CD8-positive, alpha-beta T cell (primary cell): ENCODE measurements at regions of chr17 and their contacts with region 1.

Region 1: GRCh38 chr17:80219013-80219762 is 945 bp downstream of the SGSH start:
- DNase-seq: peak; percentile 84 to 97 (median 95)
- ATAC-seq: peak; percentile 89
- H3K4me3 ChIP-seq: peak overlapping the region; percentile 94 to 96
- H3K4me3 Mint-ChIP-seq: peak overlapping the region; percentile 91
- H3K27ac ChIP-seq: peak overlapping the region; percentile 86 to 91
- H3K27ac Mint-ChIP-seq: peak overlapping the region; percentile 96
- H3K4me1 ChIP-seq: peaks cover 32% of the 10 kb centered on the region
- H3K4me1 Mint-ChIP-seq: peaks cover 36% of the 10 kb centered on the region
- H3K27me3 ChIP-seq: no peaks in the 10 kb centered on the region
- H3K27me3 Mint-ChIP-seq: no peaks in the 10 kb centered on the region
- CTCF ChIP-seq: no peak

Region 2: DNA sequence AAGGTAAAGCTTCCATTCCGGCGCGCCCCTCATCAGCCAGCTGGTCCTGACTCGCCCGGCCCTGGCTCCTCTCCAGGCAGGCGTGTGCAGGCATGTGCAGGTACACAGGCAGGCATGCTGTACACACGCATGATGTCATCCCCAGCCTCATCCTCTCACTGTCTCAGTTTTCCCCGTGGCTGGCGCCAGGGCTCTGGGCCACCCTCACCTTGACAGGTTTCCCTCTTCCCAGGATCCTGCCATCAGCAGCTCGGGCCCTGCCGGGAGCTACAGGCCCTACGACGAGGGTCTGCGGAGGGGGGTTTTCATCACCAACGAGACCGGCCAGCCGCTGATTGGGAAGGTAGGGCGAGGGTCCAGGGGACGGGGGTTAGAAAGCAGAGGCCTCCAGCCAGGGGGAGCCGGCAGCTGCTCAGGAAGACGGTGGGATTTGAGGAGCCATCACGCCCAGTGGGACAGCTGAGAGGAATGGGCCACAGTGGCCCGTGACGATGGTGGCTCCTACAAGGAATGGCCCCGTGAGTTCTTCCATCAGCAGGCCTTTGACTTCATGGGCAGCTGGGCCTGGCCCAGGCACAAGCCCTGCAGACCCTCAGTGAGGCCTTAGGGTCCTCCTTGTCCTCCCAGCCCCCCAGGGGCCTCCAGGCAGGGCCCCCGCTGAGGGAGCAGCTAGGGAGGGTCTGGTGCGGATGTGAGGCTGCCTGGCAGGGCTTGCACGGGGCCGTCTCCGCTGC is 109.3 kb before region 1 on chr17:
- CTCF ChIA-PET with region 1: no interaction called
- POLR2A ChIA-PET with region 1: no interaction called
- intact Hi-C with region 1: no loop called
- DNase-seq: no peak
- ATAC-seq: no peak
- H3K4me3 ChIP-seq: no peak overlapping the region
- H3K4me3 Mint-ChIP-seq: no peak overlapping the region
- H3K27ac ChIP-seq: no peak overlapping the region
- H3K27ac Mint-ChIP-seq: no peak overlapping the region
- H3K4me1 ChIP-seq: no peaks in the 10 kb centered on the region
- H3K4me1 Mint-ChIP-seq: no peaks in the 10 kb centered on the region
- H3K27me3 ChIP-seq: no peaks in the 10 kb centered on the region
- H3K27me3 Mint-ChIP-seq: no peaks in the 10 kb centered on the region
- CTCF ChIP-seq: no peak

Region 3: GRCh38 chr17:80189611-80190010 is 29.6 kb before region 1 on chr17:
- CTCF ChIA-PET with region 1: no interaction called
- POLR2A ChIA-PET with region 1: no interaction called
- intact Hi-C with region 1: no loop called
- DNase-seq: no peak
- ATAC-seq: no peak
- H3K4me3 ChIP-seq: no peak overlapping the region
- H3K4me3 Mint-ChIP-seq: no peak overlapping the region
- H3K27ac ChIP-seq: no peak overlapping the region
- H3K27ac Mint-ChIP-seq: no peak overlapping the region
- H3K4me1 ChIP-seq: no peaks in the 10 kb centered on the region
- H3K4me1 Mint-ChIP-seq: no peaks in the 10 kb centered on the region
- H3K27me3 ChIP-seq: no peaks in the 10 kb centered on the region
- H3K27me3 Mint-ChIP-seq: peaks cover 9% of the 10 kb centered on the region
- CTCF ChIP-seq: no peak

Region 4: GRCh38 chr17:80254396-80255251 is 35.4 kb after region 1 on chr17:
- CTCF ChIA-PET with region 1: interaction called, 3 read pairs
- POLR2A ChIA-PET with region 1: interaction called, 3 read pairs
- intact Hi-C with region 1: loop called (anchors 1 kb)
- DNase-seq: peak in 5 of 9 experiments; percentile 33 to 75 (median 54)
- ATAC-seq: peak; percentile 34
- H3K4me3 ChIP-seq: no peak overlapping the region
- H3K4me3 Mint-ChIP-seq: no peak overlapping the region
- H3K27ac ChIP-seq: peak overlapping the region in 1 of 2 experiments; percentile 51
- H3K27ac Mint-ChIP-seq: peak overlapping the region; percentile 85
- H3K4me1 ChIP-seq: peaks cover 7% of the 10 kb centered on the region
- H3K4me1 Mint-ChIP-seq: peaks cover 28% of the 10 kb centered on the region
- H3K27me3 ChIP-seq: no peaks in the 10 kb centered on the region
- H3K27me3 Mint-ChIP-seq: no peaks in the 10 kb centered on the region
- CTCF ChIP-seq: no peak

Region 5: DNA sequence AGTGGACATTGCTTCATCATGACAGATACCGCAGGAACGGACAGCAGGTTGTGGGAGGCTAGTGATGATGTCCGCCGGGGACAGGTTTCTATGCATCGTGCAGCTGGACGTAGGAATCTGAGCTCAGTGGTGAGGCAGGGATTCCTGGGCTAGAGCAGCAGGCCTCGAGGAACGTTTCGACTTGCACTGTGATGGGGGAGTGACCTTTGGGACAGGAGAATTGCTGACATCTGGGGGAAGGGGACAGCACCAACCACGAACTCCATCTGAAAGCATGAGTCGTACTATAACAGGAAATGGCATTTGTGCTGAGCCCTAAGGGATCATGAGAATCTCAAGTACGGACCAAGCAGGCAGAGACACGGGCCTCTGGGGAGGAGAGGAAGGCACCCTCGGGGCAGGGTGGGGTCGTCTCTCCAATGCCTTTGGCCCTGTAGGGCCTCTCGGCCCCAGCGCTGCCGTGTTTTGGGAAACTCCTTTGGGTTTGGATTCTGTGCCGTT is 130.0 kb after region 1 on chr17:
- CTCF ChIA-PET with region 1: no interaction called
- POLR2A ChIA-PET with region 1: no interaction called
- intact Hi-C with region 1: no loop called
- DNase-seq: no peak
- ATAC-seq: no peak
- H3K4me3 ChIP-seq: no peak overlapping the region
- H3K4me3 Mint-ChIP-seq: no peak overlapping the region
- H3K27ac ChIP-seq: no peak overlapping the region
- H3K27ac Mint-ChIP-seq: no peak overlapping the region
- H3K4me1 ChIP-seq: no peaks in the 10 kb centered on the region
- H3K4me1 Mint-ChIP-seq: no peaks in the 10 kb centered on the region
- H3K27me3 ChIP-seq: no peaks in the 10 kb centered on the region
- H3K27me3 Mint-ChIP-seq: no peaks in the 10 kb centered on the region
- CTCF ChIP-seq: no peak